ENCODE measurements at regions of chr5 and their contacts with region 1.

Region 1: GRCh38 chr5:138275379-138275782 is 960 bp upstream of the GFRA3 start:
- DNase-seq: no peak
- ATAC-seq: peak in 1 of 8 donors; percentile 56
- H3K4me3 ChIP-seq: no peak overlapping the region
- H3K27ac ChIP-seq: no peak overlapping the region
- H3K4me1 ChIP-seq: peaks cover 0 to 28% (median 8%) of the 10 kb centered on the region in 9 donors
- H3K27me3 ChIP-seq: peaks cover 0 to 36% (median 16%) of the 10 kb centered on the region in 7 donors
- CTCF ChIP-seq: no peak

Region 2: GRCh38 chr5:138241688-138242571 is 33.5 kb before region 1 on chr5:
- intact Hi-C with region 1: loop called in 1 of 10 experiments (anchors 5 kb)
- DNase-seq: peak; percentile 10 to 37
- ATAC-seq: peak; percentile 71 to 89 (median 84)
- H3K4me3 ChIP-seq: peak overlapping the region; percentile 30 to 73 (median 54)
- H3K27ac ChIP-seq: peak overlapping the region in 7 of 10 donors; percentile 2 to 49 (median 35)
- H3K4me1 ChIP-seq: peaks cover 4 to 13% (median 13%) of the 10 kb centered on the region in 9 donors
- H3K27me3 ChIP-seq: peaks cover 0 to 37% (median 3%) of the 10 kb centered on the region in 7 donors
- CTCF ChIP-seq: peak in 2 of 9 donors; percentile 6 to 7